Left colon (tissue), 2 donors: ENCODE measurements at regions of chr10 and their contacts with region 1.

Region 1: GRCh38 chr10:97553575-97554031 is 19.0 kb upstream of the ANKRD2 start:
- DNase-seq: peak in 1 of 2 donors; percentile 57
- ATAC-seq: peak; percentile 89

Region 2: GRCh38 chr10:97463363-97464132 is 90.1 kb before region 1 on chr10:
- intact Hi-C with region 1: loop called in 1 of 2 experiments (anchors 2 kb)
- DNase-seq: peak in 1 of 2 donors; percentile 37
- ATAC-seq: peak; percentile 91